ENCODE measurements at regions of chr13 and their contacts with region 1.

Region 1: GRCh38 chr13:60759499-60759898 is 362.5 kb downstream of the TDRD3 start:
- DNase-seq: peak; percentile 96
- H3K4me3 ChIP-seq: peak overlapping the region in 1 of 3 experiments; percentile 41
- H3K27ac ChIP-seq: peak overlapping the region; percentile 77
- H3K4me1 ChIP-seq: peaks cover 19% of the 10 kb centered on the region
- H3K27me3 ChIP-seq: no peaks in the 10 kb centered on the region
- CTCF ChIP-seq: no peak
- POLR2A ChIP-seq: peak; percentile 69

Region 2: GRCh38 chr13:59801107-59801880 is 958.2 kb before region 1 on chr13:
- CTCF ChIA-PET with region 1: no interaction called
- POLR2A ChIA-PET with region 1: no interaction called
- dilution Hi-C with region 1: no loop called
- intact Hi-C with region 1: no loop called
- DNase-seq: no peak
- H3K4me3 ChIP-seq: no peak overlapping the region
- H3K27ac ChIP-seq: no peak overlapping the region
- H3K4me1 ChIP-seq: no peaks in the 10 kb centered on the region
- H3K27me3 ChIP-seq: no peaks in the 10 kb centered on the region
- CTCF ChIP-seq: no peak
- POLR2A ChIP-seq: no peak

Region 3: GRCh38 chr13:60679928-60680694 is 79.4 kb before region 1 on chr13:
- CTCF ChIA-PET with region 1: no interaction called
- POLR2A ChIA-PET with region 1: no interaction called
- dilution Hi-C with region 1: no loop called
- intact Hi-C with region 1: loop called (anchors 2 kb)
- DNase-seq: peak; percentile 79
- H3K4me3 ChIP-seq: no peak overlapping the region
- H3K27ac ChIP-seq: no peak overlapping the region
- H3K4me1 ChIP-seq: peaks cover 11% of the 10 kb centered on the region
- H3K27me3 ChIP-seq: peaks cover 12 to 38% of the 10 kb centered on the region in 2 experiments
- CTCF ChIP-seq: no peak
- POLR2A ChIP-seq: no peak

Region 4: GRCh38 chr13:60811581-60811980 is 52.1 kb after region 1 on chr13:
- CTCF ChIA-PET with region 1: no interaction called
- POLR2A ChIA-PET with region 1: no interaction called
- dilution Hi-C with region 1: no loop called
- intact Hi-C with region 1: loop called (anchors 2 kb)
- DNase-seq: no peak
- H3K4me3 ChIP-seq: no peak overlapping the region
- H3K27ac ChIP-seq: peak overlapping the region; percentile 7
- H3K4me1 ChIP-seq: peaks cover 4% of the 10 kb centered on the region
- H3K27me3 ChIP-seq: no peaks in the 10 kb centered on the region
- CTCF ChIP-seq: no peak
- POLR2A ChIP-seq: no peak

Region 5: GRCh38 chr13:60933638-60934037 is 174.1 kb after region 1 on chr13:
- CTCF ChIA-PET with region 1: no interaction called
- POLR2A ChIA-PET with region 1: no interaction called
- dilution Hi-C with region 1: no loop called
- intact Hi-C with region 1: loop called (anchors 2 kb)
- DNase-seq: no peak
- H3K4me3 ChIP-seq: no peak overlapping the region
- H3K27ac ChIP-seq: no peak overlapping the region
- H3K4me1 ChIP-seq: peaks cover 11% of the 10 kb centered on the region
- H3K27me3 ChIP-seq: no peaks in the 10 kb centered on the region
- CTCF ChIP-seq: no peak
- POLR2A ChIP-seq: no peak

Region 6: GRCh38 chr13:60990032-60990733 is 230.7 kb after region 1 on chr13:
- CTCF ChIA-PET with region 1: no interaction called
- POLR2A ChIA-PET with region 1: no interaction called
- dilution Hi-C with region 1: no loop called
- intact Hi-C with region 1: loop called (anchors 1 kb)
- DNase-seq: no peak
- H3K4me3 ChIP-seq: no peak overlapping the region
- H3K27ac ChIP-seq: no peak overlapping the region
- H3K4me1 ChIP-seq: no peaks in the 10 kb centered on the region
- H3K27me3 ChIP-seq: no peaks in the 10 kb centered on the region
- CTCF ChIP-seq: peak in 1 of 2 donors; percentile 30
- POLR2A ChIP-seq: no peak

Measured in endothelial cell of umbilical vein (primary cell).